Activated CD4-positive, alpha-beta T cell treated with anti-CD3 and anti-CD28 coated beads for 36 hours (primary cell): ENCODE measurements at regions of chr6 and their contacts with region 1.

Region 1: DNA sequence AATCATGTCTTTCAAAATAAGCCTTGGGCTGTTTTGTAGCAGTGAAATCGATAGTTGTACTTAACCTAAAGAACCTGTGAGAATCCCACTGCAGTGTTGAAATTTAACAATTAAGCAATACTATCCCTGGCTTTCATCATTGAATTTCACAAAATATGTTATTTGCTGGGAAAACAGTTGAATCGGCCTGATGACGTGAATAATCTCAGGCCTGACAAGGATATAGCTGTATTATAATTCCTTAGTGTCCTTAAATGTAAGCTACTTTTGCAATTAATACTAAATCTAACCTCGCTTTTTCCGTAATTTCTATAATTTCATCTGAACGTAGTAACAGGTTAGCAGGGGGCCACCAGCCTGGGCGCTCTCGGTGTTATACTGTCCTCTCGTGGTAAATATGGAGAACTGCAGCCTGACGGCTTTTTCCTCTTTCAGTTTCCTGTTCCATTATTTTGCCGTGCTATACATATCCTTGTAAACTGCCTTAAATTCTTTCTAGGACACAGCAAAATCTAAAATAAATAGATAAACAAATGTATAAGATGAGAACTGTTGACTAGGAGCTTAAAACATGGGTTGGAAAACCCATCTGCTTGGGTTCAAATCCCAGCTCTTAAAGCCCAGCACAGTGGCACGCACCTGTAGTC is 24.0 kb downstream of the MTFR2 start:
- DNase-seq: peak; percentile 72
- ATAC-seq: peak; percentile 80
- H3K4me3 Mint-ChIP-seq: no peak overlapping the region
- H3K27ac Mint-ChIP-seq: no peak overlapping the region
- H3K4me1 Mint-ChIP-seq: peaks cover 11% of the 10 kb centered on the region
- H3K27me3 Mint-ChIP-seq: no peaks in the 10 kb centered on the region

Region 2: GRCh38 chr6:135506270-135506997 is 719.7 kb before region 1 on chr6:
- CTCF ChIA-PET with region 1: interaction called, 27 read pairs
- POLR2A ChIA-PET with region 1: no interaction called
- intact Hi-C with region 1: loop called (anchors 1 kb)
- DNase-seq: no peak
- ATAC-seq: peak; percentile 81
- H3K4me3 Mint-ChIP-seq: no peak overlapping the region
- H3K27ac Mint-ChIP-seq: no peak overlapping the region
- H3K4me1 Mint-ChIP-seq: peaks cover 5% of the 10 kb centered on the region
- H3K27me3 Mint-ChIP-seq: no peaks in the 10 kb centered on the region

Region 3: DNA sequence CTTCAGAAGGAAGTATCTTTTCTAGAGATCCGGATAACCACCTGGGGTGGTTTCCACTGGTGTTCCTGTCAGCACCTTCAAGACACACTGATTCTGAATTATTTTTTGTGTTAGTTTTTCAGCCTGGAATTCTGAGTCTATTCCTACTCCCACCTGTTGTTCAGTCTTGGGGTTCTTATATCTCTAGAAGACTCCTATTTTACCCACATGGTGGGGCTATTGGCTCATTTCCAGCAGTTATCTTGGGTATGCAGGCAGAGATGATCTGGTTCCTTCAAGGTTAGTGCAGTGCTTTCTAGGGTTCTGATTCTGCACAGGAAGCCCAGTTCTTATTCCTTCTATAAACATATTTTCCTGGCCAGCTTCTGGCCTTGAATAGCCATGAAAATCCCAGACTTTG is 550.3 kb before region 1 on chr6:
- CTCF ChIA-PET with region 1: interaction called, 9 read pairs
- POLR2A ChIA-PET with region 1: no interaction called
- intact Hi-C with region 1: loop called (anchors 1 kb)
- DNase-seq: peak; percentile 51
- ATAC-seq: peak; percentile 82
- H3K4me3 Mint-ChIP-seq: no peak overlapping the region
- H3K27ac Mint-ChIP-seq: no peak overlapping the region
- H3K4me1 Mint-ChIP-seq: peaks cover 19% of the 10 kb centered on the region
- H3K27me3 Mint-ChIP-seq: no peaks in the 10 kb centered on the region

Region 4: DNA sequence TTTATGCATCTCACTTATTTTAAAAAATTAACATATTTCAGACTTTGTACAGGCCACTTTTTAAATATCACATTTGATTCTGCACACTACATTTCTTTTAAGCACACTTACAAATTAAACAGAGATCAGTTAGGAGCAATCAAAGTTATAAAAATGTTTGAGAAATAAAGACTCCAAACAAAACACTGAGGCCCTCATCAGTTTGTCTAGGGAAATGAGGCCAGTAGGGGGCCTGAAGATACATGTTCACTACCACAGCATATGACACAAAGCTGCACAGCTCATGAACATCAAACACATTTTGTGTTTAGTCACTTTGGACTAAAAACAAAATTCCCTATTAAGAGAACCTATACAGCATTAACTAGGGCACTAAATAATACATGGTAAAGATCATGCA is 194.2 kb before region 1 on chr6:
- CTCF ChIA-PET with region 1: interaction called, 4 read pairs
- POLR2A ChIA-PET with region 1: no interaction called
- intact Hi-C with region 1: loop called (anchors 1 to 5 kb)
- DNase-seq: peak; percentile 13
- ATAC-seq: peak; percentile 47
- H3K4me3 Mint-ChIP-seq: no peak overlapping the region
- H3K27ac Mint-ChIP-seq: no peak overlapping the region
- H3K4me1 Mint-ChIP-seq: no peaks in the 10 kb centered on the region
- H3K27me3 Mint-ChIP-seq: no peaks in the 10 kb centered on the region

Region 5: GRCh38 chr6:137070303-137070702 is 844.2 kb after region 1 on chr6:
- CTCF ChIA-PET with region 1: no interaction called
- POLR2A ChIA-PET with region 1: no interaction called
- intact Hi-C with region 1: no loop called
- DNase-seq: no peak
- ATAC-seq: no peak
- H3K4me3 Mint-ChIP-seq: no peak overlapping the region
- H3K27ac Mint-ChIP-seq: no peak overlapping the region
- H3K4me1 Mint-ChIP-seq: no peaks in the 10 kb centered on the region
- H3K27me3 Mint-ChIP-seq: peaks cover 50% of the 10 kb centered on the region